ENCODE measurements at regions of chr9 and their contacts with region 1.

Region 1: GRCh38 chr9:77131399-77131798 is 45.9 kb upstream of the VPS13A start:
- ATAC-seq: peak in 5 of 8 experiments; percentile 39 to 75 (median 45)
- H3K4me3 ChIP-seq: no peak overlapping the region
- H3K27ac ChIP-seq: no peak overlapping the region
- H3K4me1 ChIP-seq: peaks cover 0 to 7% of the 10 kb centered on the region in 2 donors

Region 2: DNA sequence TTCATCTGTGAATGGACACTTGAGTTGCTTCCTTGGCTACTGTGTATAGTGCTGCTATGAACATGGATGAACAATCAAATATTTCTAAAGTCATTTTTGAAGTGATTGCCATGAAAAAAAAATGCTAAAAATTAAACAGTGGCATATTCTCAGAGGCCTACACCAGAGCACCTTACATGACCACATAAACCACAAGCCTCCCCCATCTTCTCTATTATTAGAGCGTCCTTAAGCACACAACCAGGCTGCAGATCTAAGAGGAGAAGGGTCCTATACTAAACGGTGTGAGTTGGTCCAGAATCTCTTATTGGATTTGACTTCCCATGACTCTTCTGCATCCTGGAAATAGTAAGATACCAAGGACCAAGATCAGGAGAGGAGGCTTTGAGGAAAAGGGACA is 332.9 kb before region 1 on chr9:
- in situ Hi-C with region 1: loop called in 3 of 9 experiments (anchors 25 kb)
- ATAC-seq: no peak
- H3K4me3 ChIP-seq: no peak overlapping the region
- H3K27ac ChIP-seq: no peak overlapping the region
- H3K4me1 ChIP-seq: peaks cover 5 to 10% of the 10 kb centered on the region in 2 donors

Region 3: DNA sequence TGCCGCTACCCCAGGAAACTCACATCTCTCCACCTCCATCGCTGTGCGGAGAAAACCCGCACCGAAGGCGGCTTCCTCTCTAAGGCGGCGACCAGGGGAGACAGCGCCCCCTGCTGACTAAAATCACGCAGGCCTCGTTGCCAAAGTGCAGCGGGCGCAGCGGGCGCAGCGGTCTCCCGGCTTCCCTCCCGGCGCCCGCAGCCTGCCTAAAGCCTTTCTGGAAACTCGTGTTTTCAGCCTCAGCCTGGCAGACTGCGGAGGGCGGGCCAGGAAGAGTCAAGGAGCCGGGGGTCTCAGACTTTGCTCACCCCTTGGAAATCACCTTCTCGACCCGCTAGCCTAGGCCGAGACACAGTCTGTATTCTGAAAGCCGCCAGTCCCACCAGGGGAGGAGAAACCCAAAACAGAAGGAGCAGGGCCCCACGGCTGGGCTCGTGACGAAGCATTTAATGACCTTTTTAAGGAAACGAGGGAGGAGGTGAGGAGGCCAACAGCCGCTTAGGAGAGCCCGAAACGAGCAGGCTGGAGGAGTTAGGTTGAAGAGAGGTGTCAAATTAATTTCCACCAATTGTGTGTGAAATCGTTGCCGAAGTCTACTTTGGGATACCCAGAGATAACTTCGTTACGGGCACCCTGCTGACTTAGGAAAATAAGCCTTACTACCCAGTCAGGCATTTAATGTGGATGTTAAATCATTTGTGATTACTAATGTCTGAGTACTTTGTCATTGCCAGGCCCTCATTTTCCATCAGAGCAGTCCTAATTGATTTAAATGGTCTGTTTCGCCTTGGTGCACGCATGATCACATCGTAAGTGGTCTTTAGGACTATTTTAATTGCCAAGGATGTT is 119.2 kb before region 1 on chr9:
- in situ Hi-C with region 1: loop called in 1 of 9 experiments (anchors 25 kb)
- ATAC-seq: peak; percentile 61 to 94 (median 90)
- H3K4me3 ChIP-seq: peak overlapping the region in 4 of 5 donors; percentile 3 to 19 (median 12)
- H3K27ac ChIP-seq: no peak overlapping the region
- H3K4me1 ChIP-seq: peaks cover 0 to 8% of the 10 kb centered on the region in 2 donors